ENCODE measurements at regions of chr9 and their contacts with region 1.

Region 1: DNA sequence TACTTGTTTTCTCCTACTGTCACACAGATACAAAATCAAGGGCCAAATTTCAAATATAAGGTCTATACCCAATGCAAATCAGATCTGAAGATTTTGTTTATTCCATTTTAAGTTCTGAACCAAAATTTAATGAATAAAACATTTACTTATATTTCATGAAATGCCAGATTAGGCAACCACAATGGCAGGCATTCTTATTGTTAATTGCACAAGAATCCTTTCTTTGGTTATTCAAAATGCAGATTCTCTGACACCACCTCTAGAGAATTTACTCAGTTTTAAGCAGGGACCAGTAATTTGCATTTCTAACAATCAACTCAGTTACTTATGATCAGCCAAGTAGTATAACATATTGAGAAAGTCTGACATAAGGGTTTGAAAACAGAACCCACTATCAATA is 972.4 kb upstream of the ACO1 start:
- DNase-seq: no peak
- H3K4me3 ChIP-seq: no peak overlapping the region
- H3K27ac ChIP-seq: no peak overlapping the region
- H3K4me1 ChIP-seq: no peaks in the 10 kb centered on the region
- H3K27me3 ChIP-seq: no peaks in the 10 kb centered on the region
- CTCF ChIP-seq: no peak

Region 2: DNA sequence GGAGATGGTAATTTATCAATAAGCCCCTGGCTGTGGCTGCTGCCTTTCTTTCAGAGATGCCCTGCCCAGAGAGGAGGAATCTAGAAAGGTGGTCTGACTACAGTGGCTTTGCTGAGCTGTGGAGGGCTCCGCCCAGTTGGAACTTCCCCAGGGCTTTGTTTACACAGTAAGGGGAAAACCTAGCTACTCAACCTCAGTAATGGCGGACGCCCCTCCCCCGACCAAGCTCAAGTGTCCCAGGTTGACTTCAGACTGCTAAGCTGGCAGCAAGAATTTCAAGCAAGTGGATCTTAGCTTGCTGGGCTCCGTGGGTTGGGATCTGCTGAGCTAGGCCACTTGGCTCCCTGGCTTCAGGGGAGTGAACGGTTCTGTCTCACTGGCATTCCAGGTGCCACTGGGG is 106.9 kb after region 1 on chr9:
- dilution Hi-C with region 1: loop called (anchors 25 kb)
- DNase-seq: no peak
- H3K4me3 ChIP-seq: no peak overlapping the region
- H3K27ac ChIP-seq: no peak overlapping the region
- H3K4me1 ChIP-seq: no peaks in the 10 kb centered on the region
- H3K27me3 ChIP-seq: no peaks in the 10 kb centered on the region
- CTCF ChIP-seq: no peak